GM12878 (cell line): ENCODE measurements at regions of chr10 and their contacts with region 1.

Region 1: DNA sequence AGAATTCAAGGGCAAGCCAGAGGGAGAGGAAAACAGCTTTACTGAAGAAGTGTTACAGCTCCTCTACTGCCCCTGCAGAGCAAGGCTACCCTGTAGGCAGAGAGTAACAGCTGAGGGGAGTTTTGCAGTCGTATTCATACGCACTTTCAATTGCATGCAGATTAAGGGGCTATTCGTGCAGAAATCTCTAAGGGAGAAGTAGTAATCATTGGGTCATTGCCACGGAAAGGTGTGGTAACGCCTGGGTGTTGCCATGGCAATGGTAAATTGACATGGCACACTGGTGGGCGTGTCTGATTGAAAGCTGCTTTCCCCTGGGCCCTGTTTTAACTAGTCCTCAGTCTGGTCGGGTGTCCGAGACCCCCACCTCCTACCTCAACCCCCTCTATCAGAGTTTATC is 227.2 kb downstream of the NSUN6 start:
- DNase-seq: no peak
- ATAC-seq: peak; percentile 81
- H3K4me3 ChIP-seq: no peak overlapping the region
- H3K27ac ChIP-seq: no peak overlapping the region
- H3K4me1 ChIP-seq: no peaks in the 10 kb centered on the region
- H3K27me3 ChIP-seq: no peaks in the 10 kb centered on the region
- CTCF ChIP-seq: no peak
- EP300 ChIP-seq: peak; percentile 37 to 63; a peak in 2 of 4 replicates
- POLR2A ChIP-seq: no peak
- RAD21 ChIP-seq: no peak

Region 2: GRCh38 chr10:18409599-18410397 is 14.4 kb before region 1 on chr10:
- CTCF ChIA-PET with region 1: interaction called, 16 read pairs
- POLR2A ChIA-PET with region 1: interaction called, 14 read pairs
- RAD21 ChIA-PET with region 1: interaction called, 35 read pairs
- SMC1A ChIA-PET with region 1: interaction called, 163 read pairs
- in situ Hi-C with region 1: no loop called
- intact Hi-C with region 1: no loop called
- DNase-seq: no peak
- ATAC-seq: peak; percentile 69
- H3K4me3 ChIP-seq: no peak overlapping the region
- H3K27ac ChIP-seq: no peak overlapping the region
- H3K4me1 ChIP-seq: no peaks in the 10 kb centered on the region
- H3K27me3 ChIP-seq: no peaks in the 10 kb centered on the region
- CTCF ChIP-seq: no peak
- EP300 ChIP-seq: peak in 1 of 2 experiments; percentile 48; a peak in 3 of 4 replicates
- POLR2A ChIP-seq: no peak
- RAD21 ChIP-seq: no peak

Region 3: GRCh38 chr10:18437486-18437885 is 13.3 kb after region 1 on chr10:
- CTCF ChIA-PET with region 1: interaction called, 8 read pairs
- POLR2A ChIA-PET with region 1: interaction called, 26 read pairs
- RAD21 ChIA-PET with region 1: interaction called, 11 read pairs
- SMC1A ChIA-PET with region 1: interaction called, 37 read pairs
- in situ Hi-C with region 1: no loop called
- intact Hi-C with region 1: no loop called
- DNase-seq: no peak
- ATAC-seq: no peak
- H3K4me3 ChIP-seq: no peak overlapping the region
- H3K27ac ChIP-seq: no peak overlapping the region
- H3K4me1 ChIP-seq: no peaks in the 10 kb centered on the region
- H3K27me3 ChIP-seq: no peaks in the 10 kb centered on the region
- CTCF ChIP-seq: no peak
- EP300 ChIP-seq: no peak
- POLR2A ChIP-seq: no peak
- RAD21 ChIP-seq: no peak

Region 4: DNA sequence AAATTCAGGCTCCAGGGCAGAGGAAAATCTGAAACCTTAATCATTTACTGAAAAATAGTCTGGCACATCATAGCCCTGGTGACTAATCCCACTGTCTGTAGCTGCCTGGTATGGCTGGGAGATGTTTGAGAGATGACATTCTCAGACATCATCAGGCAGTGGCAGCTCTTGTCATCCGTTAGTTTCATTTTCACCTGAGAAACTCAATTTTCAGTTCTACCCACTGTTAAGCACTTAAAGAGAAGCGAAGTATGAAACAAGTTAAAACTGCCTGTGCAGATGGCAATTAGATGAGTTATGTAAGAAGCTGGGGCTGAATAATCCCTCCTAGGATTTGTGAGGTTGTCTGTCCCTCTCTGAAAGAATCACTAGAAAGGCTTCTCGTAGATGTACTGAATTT is 77.0 kb after region 1 on chr10:
- CTCF ChIA-PET with region 1: no interaction called
- POLR2A ChIA-PET with region 1: interaction called, 3 read pairs
- RAD21 ChIA-PET with region 1: interaction called, 3 read pairs
- SMC1A ChIA-PET with region 1: interaction called, 21 read pairs
- in situ Hi-C with region 1: no loop called
- intact Hi-C with region 1: no loop called
- DNase-seq: peak; percentile 50
- ATAC-seq: peak; percentile 98
- H3K4me3 ChIP-seq: no peak overlapping the region
- H3K27ac ChIP-seq: no peak overlapping the region
- H3K4me1 ChIP-seq: peaks cover 3% of the 10 kb centered on the region; the same call in 1 of the 2 replicates
- H3K27me3 ChIP-seq: no peaks in the 10 kb centered on the region
- CTCF ChIP-seq: no peak
- EP300 ChIP-seq: no peak; a peak in 1 of 4 replicates
- POLR2A ChIP-seq: no peak
- RAD21 ChIP-seq: no peak

Region 5: DNA sequence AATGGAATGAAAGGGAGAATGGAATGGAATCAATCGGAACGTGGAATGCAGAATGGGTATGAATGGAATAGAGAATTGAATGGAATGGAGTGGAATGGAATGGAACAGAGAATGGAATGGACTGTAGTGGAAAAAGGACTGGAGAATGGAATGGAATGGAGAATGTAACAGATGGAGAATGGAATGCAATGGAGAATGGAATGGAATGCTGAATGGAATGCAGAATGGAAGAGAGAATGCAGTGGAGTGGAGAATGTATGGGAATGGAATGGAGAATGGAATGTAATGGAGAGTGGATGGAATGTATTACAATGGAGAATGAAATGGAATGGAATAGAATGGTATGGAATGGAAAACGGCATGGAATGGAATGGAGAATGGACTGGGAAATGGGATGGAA is 130.3 kb after region 1 on chr10:
- CTCF ChIA-PET with region 1: no interaction called
- POLR2A ChIA-PET with region 1: no interaction called
- RAD21 ChIA-PET with region 1: no interaction called
- SMC1A ChIA-PET with region 1: no interaction called
- in situ Hi-C with region 1: no loop called
- intact Hi-C with region 1: no loop called
- DNase-seq: no peak
- ATAC-seq: no peak
- H3K4me3 ChIP-seq: no peak overlapping the region
- H3K27ac ChIP-seq: no peak overlapping the region
- H3K4me1 ChIP-seq: no peaks in the 10 kb centered on the region
- H3K27me3 ChIP-seq: no peaks in the 10 kb centered on the region
- CTCF ChIP-seq: no peak
- EP300 ChIP-seq: no peak
- POLR2A ChIP-seq: no peak
- RAD21 ChIP-seq: no peak